Caco-2 (cell line): ENCODE measurements at regions of chr21 and their contacts with region 1.

Region 1: GRCh38 chr21:42258153-42258884 is 39.4 kb downstream of the ABCG1 start:
- DNase-seq: peak; percentile 50 to 67
- H3K4me3 ChIP-seq: no peak overlapping the region
- H3K4me3 Mint-ChIP-seq: no peak overlapping the region
- H3K27ac Mint-ChIP-seq: no peak overlapping the region
- H3K4me1 ChIP-seq: peaks cover 7% of the 10 kb centered on the region
- H3K4me1 Mint-ChIP-seq: no peaks in the 10 kb centered on the region
- H3K27me3 ChIP-seq: no peaks in the 10 kb centered on the region; the same call in 1 of the 2 replicates
- H3K27me3 Mint-ChIP-seq: peaks cover 6% of the 10 kb centered on the region
- CTCF ChIP-seq: peak; percentile 74 to 77

Region 2: GRCh38 chr21:42164064-42164789 is 94.1 kb before region 1 on chr21:
- CTCF ChIA-PET with region 1: interaction called, 7 read pairs
- POLR2A ChIA-PET with region 1: no interaction called
- intact Hi-C with region 1: loop called (anchors 1 kb)
- DNase-seq: peak; percentile 63
- H3K4me3 ChIP-seq: no peak overlapping the region
- H3K4me3 Mint-ChIP-seq: no peak overlapping the region
- H3K27ac Mint-ChIP-seq: no peak overlapping the region
- H3K4me1 ChIP-seq: no peaks in the 10 kb centered on the region
- H3K4me1 Mint-ChIP-seq: no peaks in the 10 kb centered on the region
- H3K27me3 ChIP-seq: no peaks in the 10 kb centered on the region
- H3K27me3 Mint-ChIP-seq: no peaks in the 10 kb centered on the region
- CTCF ChIP-seq: peak; percentile 43 to 72

Region 3: DNA sequence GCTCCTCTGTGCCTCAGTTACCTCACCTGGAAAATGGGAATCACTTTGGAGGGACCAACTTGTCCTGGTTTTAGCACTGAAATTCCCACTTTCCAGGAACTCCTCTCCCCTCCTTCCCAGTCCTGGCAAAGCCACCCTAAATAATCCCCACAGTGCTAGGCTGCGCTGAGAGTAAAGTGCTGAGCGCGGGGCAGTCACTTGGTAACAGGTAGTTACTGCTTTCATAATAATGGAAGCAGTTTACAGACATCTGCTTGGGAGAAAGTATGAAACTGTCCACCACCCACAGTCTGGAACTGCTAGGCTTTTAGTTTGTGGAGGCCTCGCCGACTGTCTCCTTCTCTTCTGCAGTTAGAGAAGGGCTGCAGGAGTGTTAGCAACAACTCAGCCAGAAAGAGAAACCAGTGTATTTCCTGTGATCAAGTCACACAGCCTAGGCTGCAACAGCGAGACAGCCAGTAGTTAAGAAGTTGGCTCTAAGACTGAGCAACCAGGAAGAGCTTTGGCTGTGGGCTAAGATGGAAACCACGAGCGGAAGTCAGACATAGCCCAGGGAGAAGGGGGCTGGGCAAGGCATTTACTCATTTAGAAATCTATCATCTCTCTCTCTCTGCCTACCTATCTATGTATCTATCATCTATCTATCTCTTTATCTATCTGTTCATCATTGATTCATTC is 70.2 kb before region 1 on chr21:
- CTCF ChIA-PET with region 1: no interaction called
- POLR2A ChIA-PET with region 1: no interaction called
- intact Hi-C with region 1: no loop called
- DNase-seq: no peak
- H3K4me3 ChIP-seq: no peak overlapping the region
- H3K4me3 Mint-ChIP-seq: no peak overlapping the region
- H3K27ac Mint-ChIP-seq: no peak overlapping the region
- H3K4me1 ChIP-seq: no peaks in the 10 kb centered on the region
- H3K4me1 Mint-ChIP-seq: no peaks in the 10 kb centered on the region
- H3K27me3 ChIP-seq: no peaks in the 10 kb centered on the region; the same call in 1 of the 2 replicates
- H3K27me3 Mint-ChIP-seq: peaks cover 10% of the 10 kb centered on the region
- CTCF ChIP-seq: no peak